ENCODE measurements at regions of chr2 and their contacts with region 1.

Region 1: GRCh38 chr2:224357098-224357901 is 44.6 kb downstream of the FAM124B start:
- DNase-seq: peak; percentile 82
- H3K4me3 ChIP-seq: no peak overlapping the region
- H3K27ac ChIP-seq: no peak overlapping the region
- H3K4me1 ChIP-seq: peaks cover 17% of the 10 kb centered on the region
- H3K27me3 ChIP-seq: no peaks in the 10 kb centered on the region
- CTCF ChIP-seq: peak; percentile 85

Region 2: GRCh38 chr2:223970343-223971128 is 386.8 kb before region 1 on chr2:
- CTCF ChIA-PET with region 1: interaction called, 20 read pairs
- POLR2A ChIA-PET with region 1: no interaction called
- intact Hi-C with region 1: no loop called
- DNase-seq: peak; percentile 82
- H3K4me3 ChIP-seq: no peak overlapping the region
- H3K27ac ChIP-seq: peak overlapping the region; percentile 19
- H3K4me1 ChIP-seq: peaks cover 28% of the 10 kb centered on the region
- H3K27me3 ChIP-seq: no peaks in the 10 kb centered on the region
- CTCF ChIP-seq: peak; percentile 96

Region 3: DNA sequence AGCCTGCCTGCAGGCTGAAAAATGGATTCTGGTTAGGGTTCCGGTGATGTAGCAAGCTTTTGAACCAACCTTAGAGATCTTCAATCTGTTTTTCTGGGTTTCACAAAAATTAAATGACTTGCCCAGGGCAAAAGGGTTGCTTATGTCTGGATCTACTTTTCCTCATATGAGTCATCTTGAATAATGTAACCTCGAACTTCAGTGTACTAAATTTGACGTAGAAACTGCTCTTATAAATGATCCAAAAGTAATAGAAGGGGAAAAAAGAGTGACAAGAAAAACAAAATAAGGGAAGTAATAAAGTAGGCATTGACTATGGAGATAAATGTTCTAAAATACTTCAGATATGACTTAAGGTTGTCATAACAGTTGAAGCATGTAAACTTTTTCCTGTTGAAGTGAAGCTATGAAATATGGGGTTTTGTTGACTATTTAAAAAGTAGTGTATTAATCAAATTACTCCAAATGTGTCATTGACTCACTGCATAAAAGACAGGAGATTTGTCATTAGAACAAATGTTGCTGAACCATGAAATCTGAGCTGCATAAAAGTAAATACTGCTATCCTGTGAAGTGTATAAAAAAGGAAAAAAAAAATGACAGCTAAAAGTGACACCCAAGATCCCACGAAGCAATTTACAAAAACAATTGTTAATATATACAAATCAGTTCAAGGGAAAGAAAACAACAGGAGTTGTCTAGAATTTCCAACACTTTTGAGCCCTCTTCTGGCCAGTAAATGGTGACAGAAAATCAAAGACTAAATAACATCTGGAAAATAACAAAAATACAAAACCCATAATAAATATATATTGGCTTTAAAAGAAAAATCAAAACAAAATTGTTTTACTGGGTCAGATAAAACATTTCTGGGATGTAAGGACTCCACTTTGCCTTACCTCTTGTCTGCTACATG is 214.6 kb before region 1 on chr2:
- CTCF ChIA-PET with region 1: interaction called, 3 read pairs
- POLR2A ChIA-PET with region 1: no interaction called
- intact Hi-C with region 1: loop called (anchors 5 kb)
- DNase-seq: peak; percentile 76
- H3K4me3 ChIP-seq: no peak overlapping the region
- H3K27ac ChIP-seq: peak overlapping the region; percentile 67
- H3K4me1 ChIP-seq: peaks cover 48% of the 10 kb centered on the region
- H3K27me3 ChIP-seq: no peaks in the 10 kb centered on the region
- CTCF ChIP-seq: peak; percentile 34; the same call in 1 of the 2 replicates

Region 4: DNA sequence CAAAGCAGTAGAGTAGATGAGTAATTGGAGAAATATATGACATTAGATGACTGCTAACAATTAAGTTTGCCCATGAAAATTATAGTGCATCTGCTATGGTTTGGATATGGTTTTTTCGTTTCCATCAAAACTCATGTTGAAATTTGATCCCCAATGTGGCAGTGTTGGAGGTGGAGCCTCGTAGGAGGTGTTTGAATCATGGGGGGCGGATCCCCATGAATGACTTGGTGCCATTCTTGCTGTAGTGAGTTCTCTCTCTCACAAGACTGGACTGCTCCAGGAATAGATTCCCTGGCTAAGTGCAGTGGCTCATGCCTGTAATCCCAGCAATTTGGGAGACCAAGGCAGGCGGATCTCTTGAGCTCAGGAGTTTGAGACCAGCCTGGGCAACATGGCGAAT is 237.5 kb after region 1 on chr2:
- CTCF ChIA-PET with region 1: no interaction called
- POLR2A ChIA-PET with region 1: no interaction called
- intact Hi-C with region 1: no loop called
- DNase-seq: peak; percentile 32
- H3K4me3 ChIP-seq: no peak overlapping the region
- H3K27ac ChIP-seq: no peak overlapping the region
- H3K4me1 ChIP-seq: no peaks in the 10 kb centered on the region
- H3K27me3 ChIP-seq: no peaks in the 10 kb centered on the region
- CTCF ChIP-seq: no peak

Region 5: GRCh38 chr2:224650815-224651439 is 293.6 kb after region 1 on chr2:
- CTCF ChIA-PET with region 1: no interaction called
- POLR2A ChIA-PET with region 1: no interaction called
- intact Hi-C with region 1: loop called (anchors 2 kb)
- DNase-seq: peak; percentile 70
- H3K4me3 ChIP-seq: no peak overlapping the region
- H3K27ac ChIP-seq: no peak overlapping the region
- H3K4me1 ChIP-seq: peaks cover 4% of the 10 kb centered on the region
- H3K27me3 ChIP-seq: no peaks in the 10 kb centered on the region
- CTCF ChIP-seq: peak; percentile 83

Region 6: DNA sequence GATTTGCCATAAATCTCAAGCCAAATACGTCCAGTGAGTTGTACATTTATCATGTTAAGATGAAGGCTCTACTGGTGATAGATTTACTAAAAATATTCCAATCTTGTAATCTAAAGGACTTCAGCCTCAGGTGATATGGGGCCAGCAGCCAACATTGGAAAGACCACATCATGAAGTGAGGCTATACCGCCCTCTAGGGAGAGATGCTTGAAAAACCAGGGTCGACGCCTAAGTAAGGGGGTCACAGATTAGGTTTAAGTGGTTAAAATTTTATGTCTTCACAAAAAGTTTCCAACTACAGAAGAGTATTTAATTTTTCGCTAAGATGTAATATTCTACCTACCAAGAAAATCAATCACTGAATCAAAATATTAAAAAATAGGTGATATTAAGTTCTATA is 651.6 kb after region 1 on chr2:
- CTCF ChIA-PET with region 1: no interaction called
- POLR2A ChIA-PET with region 1: no interaction called
- intact Hi-C with region 1: loop called (anchors 5 kb)
- DNase-seq: peak; percentile 37
- H3K4me3 ChIP-seq: no peak overlapping the region
- H3K27ac ChIP-seq: no peak overlapping the region
- H3K4me1 ChIP-seq: no peaks in the 10 kb centered on the region
- H3K27me3 ChIP-seq: no peaks in the 10 kb centered on the region
- CTCF ChIP-seq: peak; percentile 73

Region 7: DNA sequence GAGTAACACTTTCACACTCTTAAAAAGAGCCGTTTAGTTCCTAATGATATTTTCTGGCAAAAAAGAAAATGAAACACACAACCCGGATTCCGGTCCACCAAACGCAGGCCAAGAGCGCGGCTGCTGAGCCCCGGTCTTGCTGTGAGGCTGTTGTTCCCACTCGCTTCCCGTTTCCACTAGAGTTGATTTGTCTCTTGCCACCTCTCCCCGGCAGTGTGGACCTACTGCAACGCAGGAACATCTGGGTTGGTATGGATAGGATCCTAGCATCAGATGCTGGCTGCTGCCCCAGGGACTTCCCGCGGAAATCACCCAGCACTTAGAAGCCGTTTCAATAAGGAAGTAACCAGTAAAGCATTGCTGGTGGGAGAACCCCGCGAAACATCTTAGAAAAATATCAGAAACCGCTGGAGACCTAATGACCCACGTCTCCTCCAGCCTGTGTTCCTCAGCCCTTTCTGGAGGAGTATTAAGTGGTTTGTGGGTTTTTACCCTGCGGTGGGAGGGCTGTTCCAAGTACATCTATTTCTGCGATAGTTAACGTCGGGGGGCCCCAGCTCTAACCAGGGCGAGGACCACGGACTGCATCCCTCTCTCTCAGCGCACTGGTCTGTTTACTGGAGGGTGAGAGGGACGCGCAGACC is 684.0 kb after region 1 on chr2:
- CTCF ChIA-PET with region 1: no interaction called
- POLR2A ChIA-PET with region 1: no interaction called
- intact Hi-C with region 1: no loop called
- DNase-seq: peak; percentile 24
- H3K4me3 ChIP-seq: peak overlapping the region; percentile 53
- H3K27ac ChIP-seq: no peak overlapping the region
- H3K4me1 ChIP-seq: peaks cover 8% of the 10 kb centered on the region
- H3K27me3 ChIP-seq: peaks cover 69% of the 10 kb centered on the region
- CTCF ChIP-seq: no peak